Activated CD4-positive, alpha-beta memory T cell treated with anti-CD3 and anti-CD28 coated beads for 36 hours (primary cell): ENCODE measurements at regions of chr3 and their contacts with region 1.

Region 1: DNA sequence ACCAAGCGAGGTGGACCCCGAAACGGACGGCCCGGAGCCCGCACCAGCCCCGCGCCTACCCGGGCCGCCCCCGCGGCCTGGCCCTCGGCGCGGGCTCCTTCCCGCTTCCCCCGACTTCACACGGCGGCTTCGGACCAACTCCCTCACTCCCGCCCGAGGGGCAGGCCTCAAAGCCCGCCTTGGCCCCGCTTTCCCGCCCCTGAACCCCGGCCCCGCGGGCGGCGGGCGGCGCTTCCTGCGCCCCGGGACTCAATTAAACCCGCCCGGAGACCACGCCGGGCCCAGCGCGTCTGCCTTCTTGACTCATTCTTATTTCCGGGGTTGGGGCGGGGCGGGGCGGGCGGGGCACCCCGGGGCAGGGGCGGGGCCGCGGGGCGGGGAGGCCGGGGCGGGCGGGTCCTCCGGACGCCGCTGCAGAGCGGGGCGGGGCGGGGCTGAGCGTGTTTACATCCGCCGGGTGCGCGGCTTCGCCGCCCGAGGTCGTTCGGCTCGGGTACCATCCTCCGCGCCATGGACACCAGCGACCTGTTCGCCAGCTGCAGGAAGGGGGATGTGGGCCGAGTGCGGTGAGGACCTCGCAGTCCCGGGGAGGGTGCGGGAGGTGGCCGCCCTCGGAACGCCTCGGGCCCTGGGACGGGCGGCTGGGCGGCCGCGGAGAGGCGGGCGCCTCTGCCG is at the start of gene ABTB1:
- DNase-seq: peak; percentile 91
- H3K4me3 Mint-ChIP-seq: peak within 1 kb of the TSS; percentile 89
- H3K27ac Mint-ChIP-seq: peak within 1 kb of the TSS; percentile 89
- H3K4me1 Mint-ChIP-seq: peaks cover 23% of the 10 kb centered on the region
- H3K27me3 Mint-ChIP-seq: no peaks in the 10 kb centered on the region
- total RNA-seq, gene ABTB1: 14.8 TPM

Region 2: GRCh38 chr3:127590593-127591477 is 81.8 kb before region 1 on chr3 and contains the start of gene TPRA1:
- CTCF ChIA-PET with region 1: no interaction called
- POLR2A ChIA-PET with region 1: no interaction called
- intact Hi-C with region 1: loop called (anchors 2 kb)
- DNase-seq: peak; percentile 85
- H3K4me3 Mint-ChIP-seq: peak within 1 kb of the TSS; percentile 80
- H3K27ac Mint-ChIP-seq: peak within 1 kb of the TSS; percentile 92
- H3K4me1 Mint-ChIP-seq: peaks cover 23% of the 10 kb centered on the region
- H3K27me3 Mint-ChIP-seq: no peaks in the 10 kb centered on the region
- total RNA-seq, gene TPRA1: 18.7 to 20.9 TPM

Region 3: GRCh38 chr3:127598841-127599570 is 73.6 kb before region 1 on chr3:
- CTCF ChIA-PET with region 1: no interaction called
- POLR2A ChIA-PET with region 1: interaction called, 15 read pairs
- intact Hi-C with region 1: loop called (anchors 1 kb)
- DNase-seq: no peak
- H3K4me3 Mint-ChIP-seq: peak overlapping the region; percentile 92
- H3K27ac Mint-ChIP-seq: peak overlapping the region; percentile 90
- H3K4me1 Mint-ChIP-seq: peaks cover 44% of the 10 kb centered on the region
- H3K27me3 Mint-ChIP-seq: no peaks in the 10 kb centered on the region

Region 4: GRCh38 chr3:127697551-127698240 is 25.0 kb after region 1 on chr3:
- CTCF ChIA-PET with region 1: no interaction called
- POLR2A ChIA-PET with region 1: no interaction called
- intact Hi-C with region 1: loop called (anchors 2 kb)
- DNase-seq: peak; percentile 66
- H3K4me3 Mint-ChIP-seq: no peak overlapping the region
- H3K27ac Mint-ChIP-seq: no peak overlapping the region
- H3K4me1 Mint-ChIP-seq: no peaks in the 10 kb centered on the region
- H3K27me3 Mint-ChIP-seq: no peaks in the 10 kb centered on the region

Region 5: DNA sequence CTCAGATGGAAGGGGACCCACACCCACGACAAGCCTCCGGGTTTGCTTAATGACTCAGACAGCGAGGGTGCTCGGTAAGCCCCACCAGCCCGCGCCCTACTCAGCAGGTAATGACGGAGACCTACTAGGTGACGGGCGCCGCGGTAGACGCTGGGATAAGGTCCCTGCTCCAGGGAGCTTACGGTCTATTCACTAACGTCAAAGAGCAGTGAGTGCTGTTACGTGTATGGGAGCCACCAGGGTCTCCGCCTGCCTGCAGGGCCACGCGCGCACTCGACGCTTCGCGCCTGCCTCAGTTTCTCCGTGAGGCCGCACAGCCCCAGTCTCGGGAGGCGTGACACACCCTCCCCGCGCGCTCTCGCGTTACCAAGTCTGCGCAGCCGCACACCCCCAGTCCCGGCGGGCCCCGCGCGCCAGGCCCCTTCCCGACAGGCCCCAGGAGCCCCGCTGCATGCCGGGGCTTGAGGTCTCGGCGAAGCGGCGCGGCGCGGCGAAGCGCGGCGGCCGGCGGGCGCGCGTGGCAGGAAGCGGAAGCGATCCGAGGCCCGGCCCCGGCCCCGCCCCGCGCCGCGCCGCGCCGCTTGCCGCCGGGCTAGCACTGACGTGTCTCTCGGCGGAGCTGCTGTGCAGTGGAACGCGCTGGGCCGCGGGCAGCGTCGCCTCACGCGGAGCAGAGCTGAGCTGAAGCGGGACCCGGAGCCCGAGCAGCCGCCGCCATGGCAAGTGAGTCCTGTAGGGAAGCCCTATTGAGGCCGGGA is 379.4 kb after region 1 on chr3 and contains the start of gene SEC61A1:
- CTCF ChIA-PET with region 1: no interaction called
- POLR2A ChIA-PET with region 1: no interaction called
- intact Hi-C with region 1: loop called (anchors 1 kb)
- DNase-seq: peak; percentile 97
- H3K4me3 Mint-ChIP-seq: peak within 1 kb of the TSS; percentile 98
- H3K27ac Mint-ChIP-seq: peak within 1 kb of the TSS; percentile 90
- H3K4me1 Mint-ChIP-seq: peaks cover 36% of the 10 kb centered on the region
- H3K27me3 Mint-ChIP-seq: no peaks in the 10 kb centered on the region
- total RNA-seq, gene SEC61A1: 147 to 149 TPM

Region 6: DNA sequence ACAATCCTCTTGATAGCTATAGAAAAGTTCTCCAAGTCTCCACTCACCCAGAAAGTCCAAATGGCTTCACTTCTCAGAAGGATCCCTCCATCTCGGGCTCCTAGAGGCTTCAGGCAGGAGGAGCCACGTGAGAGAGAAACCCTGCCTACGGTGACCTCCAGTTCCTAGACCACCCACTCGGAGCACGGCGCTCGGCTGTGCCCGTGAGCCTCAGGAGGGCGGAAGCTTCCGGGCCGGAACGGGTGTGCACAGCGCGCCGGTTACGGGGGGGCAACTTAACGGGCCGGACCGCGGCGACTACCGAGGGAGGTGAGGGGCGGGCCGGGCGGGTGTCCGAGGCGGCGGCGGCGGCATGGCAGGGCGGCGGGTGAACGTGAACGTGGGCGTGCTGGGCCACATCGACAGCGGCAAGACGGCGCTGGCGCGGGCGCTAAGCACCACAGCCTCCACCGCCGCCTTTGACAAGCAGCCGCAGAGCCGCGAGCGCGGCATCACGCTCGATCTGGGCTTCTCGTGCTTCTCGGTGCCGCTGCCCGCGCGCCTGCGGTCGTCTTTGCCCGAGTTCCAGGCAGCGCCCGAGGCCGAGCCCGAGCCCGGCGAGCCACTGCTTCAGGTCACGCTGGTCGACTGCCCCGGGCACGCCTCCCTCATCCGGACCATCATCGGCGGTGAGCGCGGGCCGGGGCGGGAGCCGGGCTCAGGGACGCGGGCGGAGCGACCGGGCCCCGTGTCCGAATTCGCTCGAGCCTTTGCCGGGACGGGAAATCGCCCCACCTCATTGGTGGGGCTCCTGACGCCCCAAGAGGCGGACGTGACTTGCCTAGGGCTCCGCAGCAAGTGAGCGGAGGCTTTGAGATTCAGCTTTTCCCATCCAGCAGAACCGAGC is 480.7 kb after region 1 on chr3 and contains the start of gene EEFSEC:
- CTCF ChIA-PET with region 1: no interaction called
- POLR2A ChIA-PET with region 1: no interaction called
- intact Hi-C with region 1: loop called (anchors 5 kb)
- DNase-seq: peak; percentile 91
- H3K4me3 Mint-ChIP-seq: peak within 1 kb of the TSS; percentile 85
- H3K27ac Mint-ChIP-seq: peak within 1 kb of the TSS; percentile 78
- H3K4me1 Mint-ChIP-seq: peaks cover 18% of the 10 kb centered on the region
- H3K27me3 Mint-ChIP-seq: no peaks in the 10 kb centered on the region
- total RNA-seq, gene EEFSEC: 16.1 to 17.2 TPM